ENCODE measurements at regions of chr2 and their contacts with region 1.

Region 1: GRCh38 chr2:222707689-222708525 is 36.4 kb downstream of the MOGAT1 start:
- DNase-seq: no peak
- H3K4me3 ChIP-seq: no peak overlapping the region
- H3K27me3 ChIP-seq: no peaks in the 10 kb centered on the region
- CTCF ChIP-seq: peak; percentile 88

Region 2: DNA sequence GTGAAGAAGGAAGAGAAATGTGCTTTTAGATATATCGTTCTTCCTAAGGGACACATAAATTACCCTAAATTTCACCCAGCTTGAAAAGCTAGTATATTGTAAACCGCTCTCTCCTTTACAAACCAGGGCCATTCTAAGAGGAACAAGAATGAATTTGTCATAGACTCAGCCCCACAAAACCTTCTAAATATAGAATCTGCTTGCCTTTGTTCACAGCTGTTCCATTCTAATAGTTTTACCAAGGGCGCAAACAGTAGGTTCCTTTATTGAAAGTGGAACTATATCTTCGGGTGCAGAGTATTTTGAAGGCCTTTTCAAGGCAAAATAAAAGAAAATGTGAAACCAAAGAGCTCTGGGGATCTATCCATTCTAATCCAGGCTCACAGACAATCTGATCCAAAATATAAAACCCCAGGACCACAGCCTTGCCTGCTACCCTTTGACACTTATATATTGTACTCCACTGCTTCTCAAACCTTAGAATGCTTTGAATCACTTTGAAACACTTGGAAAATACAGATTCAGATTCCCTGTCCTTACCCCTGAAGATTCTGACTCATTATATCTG is 725.9 kb before region 1 on chr2:
- CTCF ChIA-PET with region 1: no interaction called
- POLR2A ChIA-PET with region 1: no interaction called
- DNase-seq: no peak
- H3K4me3 ChIP-seq: no peak overlapping the region
- H3K27me3 ChIP-seq: no peaks in the 10 kb centered on the region; the same call in 1 of the 2 replicates
- CTCF ChIP-seq: no peak

Region 3: DNA sequence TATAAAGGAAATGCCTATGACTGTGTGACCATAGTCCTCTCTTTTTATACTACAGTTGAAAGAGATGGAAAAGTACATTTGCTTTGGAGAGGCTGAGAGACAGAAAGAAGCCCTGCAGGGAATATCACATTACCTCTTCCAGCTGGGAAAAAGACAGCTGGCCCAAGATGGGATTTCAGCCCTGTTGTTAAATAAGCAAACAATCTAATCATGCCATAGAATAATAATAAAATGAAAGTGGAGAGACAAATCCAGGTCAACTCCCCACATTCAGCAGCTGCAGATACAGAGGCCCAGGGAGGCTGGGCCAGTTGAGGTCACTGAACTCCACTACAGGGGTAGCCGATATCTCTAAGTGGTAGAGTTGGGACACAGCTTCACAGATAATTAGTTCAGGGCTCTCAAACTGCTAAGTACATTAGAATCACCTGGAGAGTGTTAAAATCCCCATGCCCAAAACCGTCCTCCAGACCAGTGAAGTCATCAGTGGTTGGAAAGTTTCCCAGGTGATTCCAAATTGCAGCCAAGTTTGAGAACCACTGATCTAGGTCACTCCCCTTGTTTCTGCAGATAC is 45.4 kb after region 1 on chr2:
- CTCF ChIA-PET with region 1: interaction called, 10 read pairs
- POLR2A ChIA-PET with region 1: no interaction called
- DNase-seq: no peak
- H3K4me3 ChIP-seq: no peak overlapping the region
- H3K27me3 ChIP-seq: no peaks in the 10 kb centered on the region
- CTCF ChIP-seq: no peak

Region 4: GRCh38 chr2:222860740-222861410 is 153.0 kb after region 1 on chr2 and contains the start of gene ACSL3:
- CTCF ChIA-PET with region 1: interaction called, 46 read pairs
- POLR2A ChIA-PET with region 1: interaction called, 4 read pairs
- DNase-seq: no peak
- H3K4me3 ChIP-seq: peak within 1 kb of the TSS; percentile 93
- H3K27me3 ChIP-seq: no peaks in the 10 kb centered on the region
- CTCF ChIP-seq: no peak
- polyA plus RNA-seq, gene ACSL3: 46.3 and 56.8 TPM in 2 replicates

Region 5: GRCh38 chr2:222903234-222904220 is 195.6 kb after region 1 on chr2:
- CTCF ChIA-PET with region 1: interaction called, 28 read pairs
- POLR2A ChIA-PET with region 1: no interaction called
- DNase-seq: no peak
- H3K4me3 ChIP-seq: no peak overlapping the region
- H3K27me3 ChIP-seq: no peaks in the 10 kb centered on the region
- CTCF ChIP-seq: peak; percentile 61